ENCODE measurements at regions of chrX and their contacts with region 1.

Region 1: GRCh38 chrX:11363069-11363594 is 69.9 kb downstream of the AMELX start:
- DNase-seq: peak; percentile 17
- ATAC-seq: peak; percentile 96
- H3K4me3 Mint-ChIP-seq: peak overlapping the region; percentile 19
- H3K27ac Mint-ChIP-seq: peak overlapping the region; percentile 86
- H3K4me1 Mint-ChIP-seq: peaks cover 27% of the 10 kb centered on the region
- H3K27me3 Mint-ChIP-seq: no peaks in the 10 kb centered on the region
- CTCF ChIP-seq: no peak

Region 2: DNA sequence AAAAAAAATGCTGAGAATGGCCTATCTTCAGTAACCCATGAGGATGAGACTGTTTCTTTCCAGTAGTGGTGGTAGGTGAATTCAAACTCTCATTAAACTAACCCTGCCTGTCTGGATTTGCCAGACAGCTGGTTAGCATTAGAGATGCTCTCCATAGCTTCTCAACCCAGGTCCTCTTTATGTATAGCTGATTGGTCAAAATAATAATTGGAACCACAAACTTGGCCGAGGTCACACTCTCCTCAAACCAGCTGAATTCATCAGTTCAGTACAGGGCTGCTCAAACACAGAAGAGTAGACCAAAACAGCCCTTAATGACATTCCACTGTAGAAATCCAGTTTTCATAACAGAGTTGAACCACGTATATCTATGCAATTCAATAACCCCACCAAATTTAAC is 166.7 kb before region 1 on chrX:
- CTCF ChIA-PET with region 1: no interaction called
- POLR2A ChIA-PET with region 1: no interaction called
- intact Hi-C with region 1: no loop called
- DNase-seq: no peak
- ATAC-seq: no peak
- H3K4me3 Mint-ChIP-seq: no peak overlapping the region
- H3K27ac Mint-ChIP-seq: no peak overlapping the region
- H3K4me1 Mint-ChIP-seq: no peaks in the 10 kb centered on the region
- H3K27me3 Mint-ChIP-seq: no peaks in the 10 kb centered on the region
- CTCF ChIP-seq: no peak

Region 3: DNA sequence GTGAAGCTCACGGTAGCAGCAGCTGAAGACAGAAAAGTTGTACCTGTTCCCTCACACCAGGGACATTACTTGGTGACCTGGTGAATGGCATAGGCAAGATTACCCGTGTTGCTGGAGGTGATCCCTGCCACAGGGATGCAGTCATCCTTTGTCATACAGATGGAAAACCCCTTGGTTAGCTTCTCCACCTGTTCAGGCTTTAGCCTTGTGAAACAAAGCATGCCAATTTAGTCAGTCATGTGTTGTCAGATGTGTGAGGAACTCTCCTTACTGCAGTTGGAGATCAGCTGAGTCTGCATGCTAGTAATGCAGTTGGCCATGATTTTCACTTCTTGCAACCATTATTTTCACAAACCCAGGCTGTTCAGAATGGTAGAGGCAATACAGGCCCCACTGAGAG is 29.0 kb before region 1 on chrX:
- CTCF ChIA-PET with region 1: no interaction called
- POLR2A ChIA-PET with region 1: no interaction called
- intact Hi-C with region 1: loop called (anchors 5 kb)
- DNase-seq: no peak
- ATAC-seq: no peak
- H3K4me3 Mint-ChIP-seq: no peak overlapping the region
- H3K27ac Mint-ChIP-seq: no peak overlapping the region
- H3K4me1 Mint-ChIP-seq: peaks cover 14% of the 10 kb centered on the region
- H3K27me3 Mint-ChIP-seq: peaks cover 2% of the 10 kb centered on the region
- CTCF ChIP-seq: no peak

Region 4: DNA sequence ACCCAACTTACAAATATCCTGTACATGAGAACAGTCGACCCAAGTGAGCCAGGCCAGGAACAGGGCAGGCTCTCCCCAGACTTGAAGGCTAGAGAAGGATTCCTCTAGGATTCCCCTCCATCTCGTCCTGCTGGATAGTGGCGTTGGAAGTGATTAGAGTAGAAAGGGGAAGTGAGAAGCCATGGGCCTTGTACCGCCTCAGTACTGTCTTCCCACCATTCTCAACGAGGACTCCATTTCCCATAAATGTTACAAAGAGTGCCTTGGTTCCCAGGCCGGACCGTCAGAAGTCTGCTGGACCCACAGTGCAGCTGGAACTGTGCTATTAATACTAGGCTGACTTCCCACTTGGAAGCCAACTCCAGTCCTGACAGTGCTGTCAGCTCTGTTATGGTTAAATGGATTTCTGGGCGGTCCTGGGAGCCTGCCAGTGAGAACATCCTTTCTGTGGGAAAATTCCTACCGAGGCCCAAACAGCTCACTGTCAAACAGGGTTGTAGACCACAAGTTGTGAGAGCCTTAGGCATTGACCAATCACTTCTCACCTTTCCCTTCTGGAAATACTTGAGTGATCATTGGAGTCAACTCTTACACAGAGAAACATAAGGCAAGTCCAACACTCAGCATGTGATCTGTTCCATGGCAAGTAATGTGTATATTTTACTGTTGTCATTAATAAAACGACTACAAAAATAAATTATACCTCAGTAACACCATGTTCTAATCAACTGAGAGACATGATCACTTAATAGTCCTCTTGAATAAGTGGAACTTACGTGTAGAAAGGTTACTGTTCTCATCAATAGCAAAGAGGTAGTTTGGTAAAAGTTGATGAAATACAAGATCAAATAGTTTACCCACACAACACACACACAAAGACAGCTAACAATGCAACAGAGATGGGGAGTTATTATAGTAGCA is 11.5 kb before region 1 on chrX:
- CTCF ChIA-PET with region 1: no interaction called
- POLR2A ChIA-PET with region 1: interaction called, 3 read pairs
- intact Hi-C with region 1: loop called (anchors 1 kb)
- DNase-seq: no peak
- ATAC-seq: peak; percentile 53
- H3K4me3 Mint-ChIP-seq: no peak overlapping the region
- H3K27ac Mint-ChIP-seq: peak overlapping the region; percentile 81
- H3K4me1 Mint-ChIP-seq: peaks cover 32% of the 10 kb centered on the region
- H3K27me3 Mint-ChIP-seq: no peaks in the 10 kb centered on the region
- CTCF ChIP-seq: no peak

Region 5: DNA sequence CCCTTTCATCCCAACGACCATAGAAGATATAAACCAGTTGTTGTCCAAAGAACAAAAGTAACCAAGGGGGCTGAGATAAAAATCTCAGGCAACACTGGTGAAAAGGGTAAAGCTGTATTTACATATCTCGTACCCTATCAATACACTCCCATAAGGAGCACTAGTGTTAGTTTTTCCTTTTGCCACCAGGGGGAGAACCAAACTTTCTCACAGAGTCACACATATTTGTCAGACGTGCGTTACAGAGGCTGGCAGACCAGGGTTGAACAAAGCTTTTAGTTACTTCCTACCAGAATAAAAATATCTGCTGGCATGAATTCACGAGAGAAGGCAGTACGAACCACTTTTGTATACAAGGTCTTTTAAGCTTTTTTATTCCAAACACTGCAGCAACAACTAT is 18.3 kb after region 1 on chrX:
- CTCF ChIA-PET with region 1: no interaction called
- POLR2A ChIA-PET with region 1: no interaction called
- intact Hi-C with region 1: loop called (anchors 2 kb)
- DNase-seq: no peak
- ATAC-seq: peak; percentile 67
- H3K4me3 Mint-ChIP-seq: no peak overlapping the region
- H3K27ac Mint-ChIP-seq: no peak overlapping the region
- H3K4me1 Mint-ChIP-seq: peaks cover 9% of the 10 kb centered on the region
- H3K27me3 Mint-ChIP-seq: no peaks in the 10 kb centered on the region
- CTCF ChIP-seq: peak; percentile 20

Region 6: GRCh38 chrX:11758400-11759171 is 395.5 kb after region 1 on chrX:
- CTCF ChIA-PET with region 1: no interaction called
- POLR2A ChIA-PET with region 1: no interaction called
- intact Hi-C with region 1: loop called (anchors 5 kb)
- DNase-seq: peak; percentile 81
- ATAC-seq: peak; percentile 65
- H3K4me3 Mint-ChIP-seq: peak overlapping the region; percentile 94
- H3K27ac Mint-ChIP-seq: peak overlapping the region; percentile 95
- H3K4me1 Mint-ChIP-seq: peaks cover 35% of the 10 kb centered on the region
- H3K27me3 Mint-ChIP-seq: no peaks in the 10 kb centered on the region
- CTCF ChIP-seq: no peak

Region 7: DNA sequence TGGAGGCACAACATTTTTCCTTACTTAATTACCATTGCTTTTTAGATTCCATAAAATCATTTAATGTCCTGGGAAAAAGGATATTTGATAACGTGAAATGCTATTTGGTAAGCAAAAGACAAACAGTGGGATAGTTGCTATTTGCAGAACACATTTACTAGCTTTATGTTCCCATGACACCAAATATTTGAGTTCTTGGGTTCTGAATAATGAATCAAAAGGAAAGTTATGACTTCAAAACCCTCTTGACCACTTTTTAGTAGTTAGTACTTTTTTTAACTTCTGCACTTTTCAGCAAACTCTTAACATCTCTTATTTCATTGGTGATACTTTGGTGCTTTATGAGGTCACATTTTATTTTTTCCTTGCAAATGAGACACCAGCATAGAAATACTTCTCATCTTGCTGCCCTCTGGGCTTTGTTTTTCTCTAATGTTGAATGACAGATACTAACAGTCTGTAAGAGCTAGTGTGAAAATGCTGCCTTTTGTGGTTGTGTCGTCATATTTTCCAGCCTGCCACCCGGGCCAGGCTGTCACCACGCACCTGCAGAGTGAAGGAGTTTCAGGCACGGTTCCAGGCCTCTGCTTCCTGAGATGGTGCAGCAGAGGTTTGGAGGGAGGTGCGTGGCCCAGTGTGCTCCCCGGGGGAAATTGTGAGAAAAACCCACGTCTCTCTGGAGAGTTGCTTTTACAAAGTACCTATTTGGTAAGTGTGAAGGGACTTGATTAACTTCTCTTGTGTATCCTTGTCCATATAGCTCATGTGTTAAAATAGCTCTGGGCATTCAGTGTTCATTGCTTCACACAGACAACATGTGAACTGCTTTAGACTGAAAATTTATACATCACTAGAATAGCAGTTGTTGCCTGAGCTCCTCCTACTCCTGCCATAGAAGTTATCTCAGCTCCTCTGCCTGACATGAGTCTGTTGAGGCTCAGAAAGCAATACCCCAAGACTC is 429.6 kb after region 1 on chrX:
- CTCF ChIA-PET with region 1: no interaction called
- POLR2A ChIA-PET with region 1: no interaction called
- intact Hi-C with region 1: loop called (anchors 2 kb)
- DNase-seq: peak; percentile 48
- ATAC-seq: peak; percentile 91
- H3K4me3 Mint-ChIP-seq: peak overlapping the region; percentile 63
- H3K27ac Mint-ChIP-seq: peak overlapping the region; percentile 90
- H3K4me1 Mint-ChIP-seq: peaks cover 46% of the 10 kb centered on the region
- H3K27me3 Mint-ChIP-seq: no peaks in the 10 kb centered on the region
- CTCF ChIP-seq: no peak

Measured in activated B cell treated with CpG ODN at 0.5 μM for 24 hours (primary cell).